CD4-positive, alpha-beta memory T cell (primary cell): ENCODE measurements at regions of chr7 and their contacts with region 1.

Region 1: GRCh38 chr7:33895025-33895804 is 10.1 kb upstream of the BMPER start:
- DNase-seq: peak; percentile 36 to 53 (median 51)
- H3K4me3 ChIP-seq: no peak overlapping the region
- H3K4me3 Mint-ChIP-seq: peak overlapping the region in 1 of 8 donors; percentile 16
- H3K27ac ChIP-seq: no peak overlapping the region
- H3K27ac Mint-ChIP-seq: no peak overlapping the region
- H3K4me1 ChIP-seq: no peaks in the 10 kb centered on the region
- H3K4me1 Mint-ChIP-seq: peaks cover 0 to 7% (median 3%) of the 10 kb centered on the region in 4 donors
- H3K27me3 ChIP-seq: no peaks in the 10 kb centered on the region
- H3K27me3 Mint-ChIP-seq: peaks cover 29 to 35% of the 10 kb centered on the region in 2 donors

Region 2: DNA sequence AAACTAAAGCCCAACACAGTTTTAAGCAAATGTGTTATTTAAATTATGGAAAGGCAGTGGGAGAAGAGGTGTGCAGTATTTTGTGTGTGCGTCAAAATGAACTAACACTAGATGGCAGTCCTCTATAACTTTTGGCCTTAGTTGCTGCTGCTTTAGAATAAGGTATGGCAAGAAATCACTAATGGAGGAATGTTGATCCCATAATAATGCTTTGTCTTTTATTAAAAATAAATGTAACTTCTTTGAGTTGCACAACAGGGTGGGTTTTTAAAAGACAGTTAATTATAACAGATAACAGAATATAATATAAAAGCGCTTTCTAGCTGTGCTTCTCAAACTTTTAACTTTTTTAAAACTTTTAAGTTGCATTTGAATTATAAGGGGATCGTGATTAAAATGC is 709.4 kb before region 1 on chr7:
- CTCF ChIA-PET with region 1: interaction called, 10 read pairs
- POLR2A ChIA-PET with region 1: no interaction called
- intact Hi-C with region 1: loop called (anchors 1 kb)
- DNase-seq: peak in 4 of 5 donors; percentile 25 to 46 (median 30)
- H3K4me3 ChIP-seq: no peak overlapping the region
- H3K4me3 Mint-ChIP-seq: no peak overlapping the region
- H3K27ac ChIP-seq: no peak overlapping the region
- H3K27ac Mint-ChIP-seq: no peak overlapping the region
- H3K4me1 ChIP-seq: peaks cover 5% of the 10 kb centered on the region
- H3K4me1 Mint-ChIP-seq: peaks cover 5 to 11% (median 9%) of the 10 kb centered on the region in 4 donors
- H3K27me3 ChIP-seq: no peaks in the 10 kb centered on the region
- H3K27me3 Mint-ChIP-seq: no peaks in the 10 kb centered on the region

Region 3: DNA sequence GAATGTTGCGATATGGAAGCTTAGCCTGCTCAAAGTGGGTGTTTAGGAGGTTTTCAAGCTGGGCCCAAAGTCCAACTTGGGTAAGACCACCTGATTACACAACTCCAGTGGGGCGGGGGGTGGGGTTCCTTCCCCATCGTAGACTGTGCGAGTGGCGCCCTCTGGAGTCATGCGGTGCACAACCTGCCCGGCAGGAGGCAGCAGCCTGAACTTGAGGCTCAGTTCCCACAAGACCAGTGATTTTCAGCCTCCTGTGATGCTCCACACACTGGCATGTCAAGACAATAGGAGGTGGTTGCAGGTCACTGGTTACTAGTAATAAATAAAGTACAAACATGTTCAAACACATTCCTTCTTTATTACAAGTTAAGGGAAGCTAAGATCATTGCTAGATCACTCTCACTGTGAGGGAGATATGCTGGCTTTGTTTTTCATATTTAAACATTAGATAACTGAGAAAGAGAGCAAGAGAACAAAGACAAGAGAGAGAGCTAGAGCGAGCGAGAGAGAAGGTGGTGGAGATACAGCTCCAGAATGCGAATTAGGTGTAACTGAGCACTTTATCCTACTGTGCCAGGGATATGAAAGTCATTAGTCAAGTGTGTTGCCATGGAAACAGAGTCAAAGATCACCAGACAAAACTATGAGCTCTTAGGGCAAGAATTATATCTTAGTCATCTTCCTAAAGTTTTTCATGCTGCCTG is 87.3 kb before region 1 on chr7:
- CTCF ChIA-PET with region 1: no interaction called
- POLR2A ChIA-PET with region 1: no interaction called
- intact Hi-C with region 1: no loop called
- DNase-seq: no peak
- H3K4me3 ChIP-seq: no peak overlapping the region
- H3K4me3 Mint-ChIP-seq: no peak overlapping the region
- H3K27ac ChIP-seq: no peak overlapping the region
- H3K27ac Mint-ChIP-seq: no peak overlapping the region
- H3K4me1 ChIP-seq: no peaks in the 10 kb centered on the region
- H3K4me1 Mint-ChIP-seq: no peaks in the 10 kb centered on the region
- H3K27me3 ChIP-seq: no peaks in the 10 kb centered on the region
- H3K27me3 Mint-ChIP-seq: no peaks in the 10 kb centered on the region

Region 4: GRCh38 chr7:33909318-33909717 is 14.1 kb after region 1 on chr7:
- CTCF ChIA-PET with region 1: interaction called, 12 read pairs
- POLR2A ChIA-PET with region 1: interaction called, 3 read pairs
- intact Hi-C with region 1: no loop called
- DNase-seq: no peak
- H3K4me3 ChIP-seq: no peak overlapping the region
- H3K4me3 Mint-ChIP-seq: no peak overlapping the region
- H3K27ac ChIP-seq: no peak overlapping the region
- H3K27ac Mint-ChIP-seq: no peak overlapping the region
- H3K4me1 ChIP-seq: no peaks in the 10 kb centered on the region
- H3K4me1 Mint-ChIP-seq: peaks cover 0 to 6% (median 2%) of the 10 kb centered on the region in 4 donors
- H3K27me3 ChIP-seq: peaks cover 15% of the 10 kb centered on the region
- H3K27me3 Mint-ChIP-seq: peaks cover 24 to 27% of the 10 kb centered on the region in 2 donors

Region 5: GRCh38 chr7:34361663-34362250 is 466.5 kb after region 1 on chr7:
- CTCF ChIA-PET with region 1: no interaction called
- POLR2A ChIA-PET with region 1: no interaction called
- intact Hi-C with region 1: no loop called
- DNase-seq: no peak
- H3K4me3 ChIP-seq: no peak overlapping the region
- H3K4me3 Mint-ChIP-seq: no peak overlapping the region
- H3K27ac ChIP-seq: no peak overlapping the region
- H3K27ac Mint-ChIP-seq: no peak overlapping the region
- H3K4me1 ChIP-seq: no peaks in the 10 kb centered on the region
- H3K4me1 Mint-ChIP-seq: no peaks in the 10 kb centered on the region
- H3K27me3 ChIP-seq: no peaks in the 10 kb centered on the region
- H3K27me3 Mint-ChIP-seq: no peaks in the 10 kb centered on the region